ENCODE measurements at regions of chrX and their contacts with region 1.

Region 1: GRCh38 chrX:75291611-75292010 is 17.7 kb downstream of the UPRT start:
- DNase-seq: no peak
- ATAC-seq: no peak
- H3K4me3 ChIP-seq: no peak overlapping the region
- H3K27ac ChIP-seq: no peak overlapping the region
- H3K4me1 ChIP-seq: no peaks in the 10 kb centered on the region
- H3K27me3 ChIP-seq: peaks cover 0 to 6% (median 0%) of the 10 kb centered on the region in 3 donors
- CTCF ChIP-seq: no peak

Region 2: DNA sequence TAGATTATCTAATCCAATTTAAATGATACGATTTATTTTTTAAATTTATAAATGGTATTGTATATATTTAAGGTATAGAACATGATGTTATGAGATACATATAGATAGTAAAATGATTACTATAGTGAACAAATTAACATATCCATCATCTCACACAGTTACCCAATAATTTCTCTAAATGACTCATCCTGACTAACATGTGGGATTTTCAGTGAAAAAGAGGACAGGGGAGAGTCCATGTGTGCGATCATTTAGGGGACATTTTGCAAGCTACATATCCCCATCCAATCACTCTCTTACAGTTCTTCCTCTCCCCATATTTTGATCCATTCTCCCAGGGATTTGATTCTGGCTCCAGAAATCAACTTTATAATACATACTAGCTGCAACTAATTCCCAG is 223.7 kb before region 1 on chrX:
- intact Hi-C with region 1: no loop called
- DNase-seq: no peak
- ATAC-seq: no peak
- H3K4me3 ChIP-seq: no peak overlapping the region
- H3K27ac ChIP-seq: no peak overlapping the region
- H3K4me1 ChIP-seq: no peaks in the 10 kb centered on the region
- H3K27me3 ChIP-seq: no peaks in the 10 kb centered on the region
- CTCF ChIP-seq: no peak

Region 3: DNA sequence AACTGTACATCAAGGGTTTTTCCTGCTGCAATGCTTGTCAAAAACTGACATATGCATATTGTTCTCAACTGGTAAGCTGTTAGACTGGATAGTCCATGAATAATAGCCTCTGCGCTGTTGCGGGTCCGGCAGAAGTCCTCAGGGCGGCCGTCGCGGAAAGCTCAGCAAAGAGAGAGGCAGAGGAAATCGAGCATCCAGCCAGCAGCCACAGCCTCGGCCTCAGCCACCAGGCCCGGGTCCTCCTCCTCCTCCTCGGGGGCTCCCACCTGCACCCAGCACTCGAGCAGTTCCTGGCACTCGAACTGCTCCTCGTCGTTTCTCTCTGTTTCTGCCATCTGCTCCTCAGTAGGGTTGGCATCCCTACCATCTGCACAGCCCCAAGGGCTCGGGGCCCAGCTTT is 36.0 kb after region 1 on chrX:
- intact Hi-C with region 1: loop called in 1 of 2 experiments (anchors 1 kb)
- DNase-seq: no peak
- ATAC-seq: no peak
- H3K4me3 ChIP-seq: no peak overlapping the region
- H3K27ac ChIP-seq: no peak overlapping the region
- H3K4me1 ChIP-seq: no peaks in the 10 kb centered on the region
- H3K27me3 ChIP-seq: no peaks in the 10 kb centered on the region
- CTCF ChIP-seq: no peak

Region 4: GRCh38 chrX:75365243-75365975 is 73.8 kb after region 1 on chrX:
- intact Hi-C with region 1: no loop called
- DNase-seq: no peak
- ATAC-seq: no peak
- H3K4me3 ChIP-seq: no peak overlapping the region
- H3K27ac ChIP-seq: no peak overlapping the region
- H3K4me1 ChIP-seq: no peaks in the 10 kb centered on the region
- H3K27me3 ChIP-seq: no peaks in the 10 kb centered on the region
- CTCF ChIP-seq: no peak

Measured in psoas muscle (tissue), 8 donors.